Posterior vena cava (tissue), 2 donors: ENCODE measurements at regions of chr2 and their contacts with region 1.

Region 1: GRCh38 chr2:177658309-177658708 is 265.7 kb downstream of the AGPS start:
- DNase-seq: no peak

Region 2: GRCh38 chr2:177705511-177706173 is 47.3 kb after region 1 on chr2:
- intact Hi-C with region 1: loop called in 1 of 2 experiments (anchors 1 kb)
- DNase-seq: no peak

Region 3: GRCh38 chr2:177783835-177784744 is 125.8 kb after region 1 on chr2:
- intact Hi-C with region 1: no loop called
- DNase-seq: no peak